Activated naive CD4-positive, alpha-beta T cell treated with anti-CD3 and anti-CD28 coated beads, Interleukin-2, amount 10 ng/mL, durations not matched to agents 7 days and 5 days (primary cell): ENCODE measurements at regions of chr12 and their contacts with region 1.

Region 1: DNA sequence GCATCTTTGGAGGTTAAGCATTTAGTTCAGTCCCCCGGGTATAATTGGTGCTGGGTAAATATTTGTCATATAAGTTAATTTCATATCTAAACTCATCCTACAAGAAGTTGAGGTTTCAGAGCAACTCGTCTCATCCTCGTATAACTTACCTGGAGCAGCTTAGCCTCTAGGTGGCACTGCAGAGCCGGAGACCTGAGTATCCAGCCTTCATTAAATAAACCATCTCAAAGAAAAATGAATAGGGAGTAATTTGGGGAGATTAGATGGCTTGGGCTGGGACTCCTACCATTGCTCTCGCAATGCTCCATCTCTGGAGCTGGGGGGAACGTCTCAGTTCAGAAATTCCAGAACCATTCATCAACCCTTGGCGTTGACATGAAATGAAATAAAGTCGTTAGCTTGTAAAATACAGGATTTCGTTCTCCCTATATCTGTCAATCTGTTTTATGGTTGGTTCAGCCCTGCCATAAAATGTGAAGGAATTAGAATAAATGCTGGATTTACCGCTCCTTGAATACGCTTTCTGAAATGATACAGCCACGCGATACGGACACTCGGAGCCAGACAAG is 122.9 kb upstream of the TMEM132D start:
- DNase-seq: peak; percentile 64
- H3K4me3 Mint-ChIP-seq: no peak overlapping the region
- H3K27ac Mint-ChIP-seq: no peak overlapping the region
- H3K4me1 Mint-ChIP-seq: no peaks in the 10 kb centered on the region
- H3K27me3 Mint-ChIP-seq: no peaks in the 10 kb centered on the region

Region 2: DNA sequence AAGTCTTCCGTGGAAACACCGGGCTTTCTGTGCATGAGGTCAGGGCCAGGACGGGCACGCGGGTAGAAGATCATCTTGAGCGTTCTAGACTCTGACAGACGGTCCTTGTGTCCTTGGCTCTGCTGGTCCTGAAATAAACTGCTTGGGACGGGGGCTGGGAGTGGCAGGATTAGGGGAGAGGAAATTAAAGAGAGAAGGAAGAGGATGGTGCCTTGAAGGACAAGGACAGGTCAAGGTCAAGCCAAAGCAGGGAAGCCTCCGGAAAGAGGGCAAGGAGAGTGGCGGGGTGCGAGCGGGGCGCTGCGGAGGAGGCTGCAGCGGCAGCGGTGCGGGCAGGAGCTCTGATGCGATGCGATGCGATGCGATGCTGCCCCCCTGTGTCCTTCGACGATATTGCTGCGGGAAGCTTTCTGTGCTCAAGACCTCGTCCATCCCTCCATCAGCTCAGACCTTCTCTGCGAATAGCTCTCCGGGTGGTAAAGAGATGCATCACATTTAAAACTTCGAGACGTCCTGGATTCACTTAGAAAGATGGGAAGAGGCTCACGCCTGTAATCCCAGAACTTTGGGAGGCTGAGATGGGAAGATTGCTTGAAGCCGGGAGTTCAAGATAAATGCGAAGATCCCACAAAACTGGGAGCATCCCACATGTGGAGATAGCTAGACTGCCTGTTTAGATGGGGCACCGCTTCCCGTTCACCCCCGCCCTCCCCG is 12.8 kb before region 1 on chr12:
- CTCF ChIA-PET with region 1: interaction called, 14 read pairs
- DNase-seq: peak; percentile 64
- H3K4me3 Mint-ChIP-seq: no peak overlapping the region
- H3K27ac Mint-ChIP-seq: no peak overlapping the region
- H3K4me1 Mint-ChIP-seq: no peaks in the 10 kb centered on the region
- H3K27me3 Mint-ChIP-seq: no peaks in the 10 kb centered on the region